ENCODE measurements at regions of chr7 and their contacts with region 1.

Region 1: DNA sequence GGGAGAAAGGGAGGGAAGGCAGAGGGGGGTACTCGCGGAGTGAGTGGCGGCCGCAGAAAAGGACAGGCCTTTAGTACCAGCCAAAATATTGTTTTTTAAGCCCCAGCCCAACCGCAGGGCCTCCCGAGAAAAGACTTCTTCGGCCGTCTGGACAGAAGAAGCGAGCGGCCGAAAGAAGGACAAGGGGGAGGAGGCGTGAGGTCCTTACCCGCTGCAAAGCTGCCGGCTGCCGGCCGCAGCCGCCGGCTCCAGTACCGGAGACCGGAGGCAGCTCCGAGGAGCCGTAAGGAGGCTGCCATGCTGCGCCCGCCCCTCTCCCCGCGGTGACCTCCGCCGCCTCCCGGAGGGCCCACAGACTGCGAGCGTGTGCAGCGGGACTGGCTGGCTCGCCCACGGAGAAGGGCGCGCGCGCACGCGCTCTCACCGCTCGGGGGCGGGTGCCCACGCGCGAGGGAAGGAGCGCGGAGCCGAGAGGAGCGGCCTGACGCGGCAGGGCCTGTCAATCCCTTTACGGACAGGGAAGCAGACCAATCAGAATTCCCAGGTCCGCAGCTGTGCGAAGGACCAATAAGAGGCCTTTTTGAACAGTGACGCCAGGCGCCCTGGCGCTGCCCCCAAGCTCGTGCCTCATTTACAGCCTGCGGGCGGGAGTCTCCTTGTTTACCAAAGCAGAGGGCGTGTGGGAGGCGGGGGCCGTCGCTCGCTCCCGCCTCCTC is at the start of gene HIBADH:
- DNase-seq: peak; percentile 99
- ATAC-seq: peak; percentile 98
- H3K4me3 ChIP-seq: peak within 1 kb of the TSS; percentile 79
- H3K27ac ChIP-seq: peak within 1 kb of the TSS; percentile 90 to 94
- H3K4me1 ChIP-seq: peaks cover 16% of the 10 kb centered on the region; the same call in 2 of the 3 replicates
- CTCF ChIP-seq: no peak
- EP300 ChIP-seq: no peak
- POLR2A ChIP-seq: peak; percentile 84
- RAD21 ChIP-seq: peak in 1 of 2 experiments; percentile 15; a peak in 2 of 5 replicates
- polyA plus RNA-seq, gene HIBADH: 108 and 118 TPM in 2 replicates

Region 2: DNA sequence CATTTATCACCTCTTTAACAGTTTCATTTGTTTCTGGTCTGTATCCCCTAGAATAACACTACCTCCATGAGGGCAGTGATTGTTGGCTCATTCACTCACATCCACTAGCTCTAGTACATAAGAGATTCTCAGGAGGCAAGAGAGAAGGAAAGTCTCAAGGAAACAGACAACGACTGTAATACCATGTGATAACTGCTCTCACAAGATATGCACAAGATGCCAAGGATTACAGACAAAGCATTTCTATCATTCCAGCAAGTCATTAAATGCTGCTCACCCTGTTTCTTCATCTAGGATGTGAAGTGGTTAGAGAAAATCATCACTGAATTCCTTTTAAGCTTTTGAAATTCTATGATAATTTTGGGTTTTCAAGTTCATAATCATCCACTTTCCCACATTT is 115.2 kb before region 1 on chr7:
- CTCF ChIA-PET with region 1: no interaction called
- POLR2A ChIA-PET with region 1: no interaction called
- DNase-seq: no peak
- ATAC-seq: no peak
- H3K4me3 ChIP-seq: no peak overlapping the region
- H3K27ac ChIP-seq: no peak overlapping the region
- H3K4me1 ChIP-seq: peaks cover 22% of the 10 kb centered on the region; the same call in 2 of the 3 replicates
- CTCF ChIP-seq: no peak
- EP300 ChIP-seq: no peak
- POLR2A ChIP-seq: no peak
- RAD21 ChIP-seq: no peak

Region 3: DNA sequence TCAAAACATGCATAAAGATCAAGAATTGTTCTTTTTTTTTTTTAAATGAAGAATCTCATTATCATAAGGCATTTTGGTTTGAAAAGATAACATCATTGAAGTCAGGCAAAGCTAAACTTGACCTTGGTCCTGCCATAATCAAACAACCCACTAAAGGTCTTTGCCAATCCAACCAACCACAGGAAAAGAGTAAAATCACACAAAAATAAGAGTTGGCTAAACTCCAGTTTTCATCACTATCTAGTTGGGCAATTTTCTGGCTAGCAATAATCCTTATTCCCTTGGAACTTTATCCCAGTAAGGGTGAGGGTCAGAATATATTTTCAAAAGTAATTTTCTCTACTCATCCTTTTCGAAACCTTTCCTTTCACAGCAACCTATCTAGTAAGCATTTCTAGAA is 62.4 kb before region 1 on chr7:
- CTCF ChIA-PET with region 1: no interaction called
- POLR2A ChIA-PET with region 1: no interaction called
- DNase-seq: no peak
- ATAC-seq: no peak
- H3K4me3 ChIP-seq: no peak overlapping the region
- H3K27ac ChIP-seq: no peak overlapping the region
- H3K4me1 ChIP-seq: peaks cover 31% of the 10 kb centered on the region
- CTCF ChIP-seq: no peak
- EP300 ChIP-seq: no peak
- POLR2A ChIP-seq: no peak
- RAD21 ChIP-seq: no peak

Region 4: DNA sequence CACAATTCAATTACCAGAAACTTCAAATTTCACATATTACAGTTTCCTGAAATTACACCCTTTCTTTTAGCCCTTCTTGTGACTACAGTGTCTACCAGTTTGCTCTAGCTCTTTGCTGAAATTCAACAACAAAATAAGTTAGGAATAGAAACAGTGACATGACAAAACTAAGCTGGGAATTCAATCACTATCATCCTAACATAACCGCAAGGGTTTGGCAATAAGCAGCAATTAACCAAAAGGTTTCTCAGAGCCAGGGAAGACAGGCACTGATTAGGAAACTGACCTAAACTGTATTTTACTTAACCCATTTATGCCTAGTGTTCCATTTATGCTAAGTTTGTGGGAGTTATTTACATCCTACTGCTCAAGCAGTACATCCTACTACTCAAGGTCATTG is 31.3 kb before region 1 on chr7:
- CTCF ChIA-PET with region 1: no interaction called
- POLR2A ChIA-PET with region 1: no interaction called
- DNase-seq: no peak
- ATAC-seq: no peak
- H3K4me3 ChIP-seq: no peak overlapping the region
- H3K27ac ChIP-seq: no peak overlapping the region
- H3K4me1 ChIP-seq: peaks cover 9% of the 10 kb centered on the region
- CTCF ChIP-seq: no peak
- EP300 ChIP-seq: no peak
- POLR2A ChIP-seq: no peak
- RAD21 ChIP-seq: no peak

Region 5: DNA sequence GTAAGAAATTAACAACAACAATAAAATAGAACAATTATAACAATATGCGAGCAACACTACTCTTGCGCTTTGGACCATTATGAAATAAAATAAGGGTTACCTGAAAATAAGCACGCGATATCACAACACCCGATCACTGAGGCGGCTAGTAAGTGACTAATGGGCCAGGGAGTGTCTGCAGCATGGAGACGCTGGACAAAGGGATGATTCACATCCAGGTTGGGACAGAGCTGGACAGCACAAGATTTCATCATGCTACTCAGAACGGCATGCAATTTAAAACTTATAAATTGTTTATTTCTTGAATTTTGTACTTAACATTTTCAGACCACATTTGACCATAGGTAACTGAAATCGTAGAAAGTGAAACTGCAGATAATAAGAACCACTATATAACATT is 15.6 kb before region 1 on chr7:
- CTCF ChIA-PET with region 1: interaction called, 8 read pairs
- POLR2A ChIA-PET with region 1: interaction called, 11 read pairs
- DNase-seq: peak; percentile 64 to 76
- ATAC-seq: peak; percentile 94 to 99
- H3K4me3 ChIP-seq: peak overlapping the region; percentile 13; the same call in 1 of the 3 replicates
- H3K27ac ChIP-seq: peak overlapping the region; percentile 81 to 84
- H3K4me1 ChIP-seq: peaks cover 37% of the 10 kb centered on the region
- CTCF ChIP-seq: no peak
- EP300 ChIP-seq: no peak
- POLR2A ChIP-seq: no peak
- RAD21 ChIP-seq: no peak

Region 6: DNA sequence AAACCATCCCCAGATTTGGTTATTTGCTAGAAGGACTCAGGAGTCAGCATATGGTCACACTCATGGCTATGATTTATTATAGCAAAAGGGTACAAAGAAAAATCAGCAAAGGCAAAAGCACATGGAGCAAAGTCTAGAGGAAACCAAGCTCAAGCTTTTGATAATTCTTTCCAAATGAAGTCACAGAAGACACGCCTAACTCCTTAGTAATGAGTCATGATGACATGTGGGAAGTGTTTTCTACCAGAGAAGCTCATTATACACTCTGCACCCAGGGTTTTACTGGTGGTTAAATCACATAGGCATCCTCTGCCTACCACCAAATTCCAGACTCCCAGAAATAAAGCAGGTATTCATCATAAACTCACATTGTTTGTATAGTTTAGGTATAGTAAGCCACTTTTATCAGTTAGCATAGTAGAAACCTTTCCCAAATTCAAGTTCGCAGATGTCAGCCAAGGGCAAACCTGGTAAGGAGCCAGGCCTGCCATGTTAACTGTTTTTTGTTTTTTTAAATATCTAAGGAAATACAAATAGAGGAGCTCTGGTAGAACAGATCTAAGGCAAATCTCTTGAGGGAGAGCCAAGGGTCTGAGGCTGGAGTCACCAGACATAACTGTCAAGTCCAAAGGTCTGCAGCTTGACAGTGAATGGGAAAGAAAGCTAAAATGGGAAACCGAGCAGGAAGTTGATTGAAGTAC is 15.4 kb after region 1 on chr7:
- CTCF ChIA-PET with region 1: interaction called, 6 read pairs
- POLR2A ChIA-PET with region 1: interaction called, 17 read pairs
- DNase-seq: peak; percentile 84 to 93
- ATAC-seq: peak; percentile 96 to 97
- H3K4me3 ChIP-seq: no peak overlapping the region
- H3K27ac ChIP-seq: peak overlapping the region; percentile 88 to 91
- H3K4me1 ChIP-seq: peaks cover 31% of the 10 kb centered on the region
- CTCF ChIP-seq: no peak
- EP300 ChIP-seq: no peak
- POLR2A ChIP-seq: no peak
- RAD21 ChIP-seq: no peak

Region 7: GRCh38 chr7:27723085-27723484 is 60.4 kb after region 1 on chr7:
- CTCF ChIA-PET with region 1: interaction called, 10 read pairs
- POLR2A ChIA-PET with region 1: no interaction called
- DNase-seq: peak in 1 of 2 experiments; percentile 59
- ATAC-seq: peak; percentile 99
- H3K4me3 ChIP-seq: no peak overlapping the region
- H3K27ac ChIP-seq: no peak overlapping the region
- H3K4me1 ChIP-seq: no peaks in the 10 kb centered on the region; the same call in 2 of the 3 replicates
- CTCF ChIP-seq: peak; percentile 34; the same call in 2 of the 3 replicates
- EP300 ChIP-seq: no peak
- POLR2A ChIP-seq: no peak
- RAD21 ChIP-seq: peak; percentile 40 to 50; a peak in 3 of 5 replicates

Region 8: GRCh38 chr7:27739909-27740448 is 77.3 kb after region 1 on chr7 and contains the start of gene TAX1BP1:
- CTCF ChIA-PET with region 1: interaction called, 9 read pairs
- POLR2A ChIA-PET with region 1: interaction called, 10 read pairs
- DNase-seq: peak; percentile 86 to 94
- ATAC-seq: peak; percentile 96 to 97
- H3K4me3 ChIP-seq: peak within 1 kb of the TSS; percentile 94
- H3K27ac ChIP-seq: peak within 1 kb of the TSS; percentile 91 to 92
- H3K4me1 ChIP-seq: peaks cover 35% of the 10 kb centered on the region
- CTCF ChIP-seq: no peak
- EP300 ChIP-seq: no peak
- POLR2A ChIP-seq: peak; percentile 83
- RAD21 ChIP-seq: no peak
- polyA plus RNA-seq, gene TAX1BP1: 180 and 249 TPM in 2 replicates

Region 9: DNA sequence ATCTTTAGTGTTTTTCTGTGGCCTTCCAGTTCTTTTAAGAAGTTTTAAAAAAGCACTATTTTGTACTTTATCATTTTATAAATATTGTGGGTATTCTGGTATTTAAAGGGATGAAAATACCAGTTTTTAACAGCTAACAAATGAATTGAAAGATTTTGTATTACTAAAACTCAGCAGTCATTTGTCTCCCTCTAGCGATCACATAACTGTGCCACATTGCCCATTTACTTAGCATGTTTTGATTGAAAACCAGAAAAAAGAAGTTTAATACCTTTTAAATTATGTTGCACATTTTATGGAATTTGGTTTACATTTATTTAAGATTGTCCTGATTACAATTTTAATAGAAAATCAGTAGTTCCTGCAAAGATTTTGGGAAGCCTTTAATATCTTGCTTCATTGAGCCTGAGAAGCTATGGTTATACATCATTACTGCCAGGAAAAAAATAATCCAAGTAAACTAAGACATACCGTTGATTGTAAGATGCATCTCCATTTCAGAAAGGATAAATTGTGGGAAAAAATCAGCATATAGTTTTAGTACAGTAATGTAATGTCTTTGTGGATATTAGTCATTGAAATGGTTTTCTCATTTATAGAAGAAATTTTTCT is 112.2 kb after region 1 on chr7:
- CTCF ChIA-PET with region 1: interaction called, 10 read pairs
- POLR2A ChIA-PET with region 1: no interaction called
- DNase-seq: peak in 1 of 2 experiments; percentile 55
- ATAC-seq: peak in 1 of 2 experiments; percentile 67; a peak in 3 of 6 replicates
- H3K4me3 ChIP-seq: no peak overlapping the region
- H3K27ac ChIP-seq: no peak overlapping the region
- H3K4me1 ChIP-seq: peaks cover 26% of the 10 kb centered on the region
- CTCF ChIP-seq: peak; percentile 88
- EP300 ChIP-seq: no peak
- POLR2A ChIP-seq: no peak
- RAD21 ChIP-seq: peak; percentile 84 to 88